Activated CD4-positive, alpha-beta T cell treated with anti-CD3 and anti-CD28 coated beads for 36 hours (primary cell): ENCODE measurements at regions of chr11 and their contacts with region 1.

Region 1: GRCh38 chr11:96112201-96113128 is 188.6 kb upstream of the MTMR2 start:
- DNase-seq: peak; percentile 58
- ATAC-seq: peak; percentile 87
- H3K4me3 Mint-ChIP-seq: peak overlapping the region; percentile 25
- H3K27ac Mint-ChIP-seq: peak overlapping the region; percentile 88
- H3K4me1 Mint-ChIP-seq: peaks cover 53% of the 10 kb centered on the region
- H3K27me3 Mint-ChIP-seq: no peaks in the 10 kb centered on the region

Region 2: DNA sequence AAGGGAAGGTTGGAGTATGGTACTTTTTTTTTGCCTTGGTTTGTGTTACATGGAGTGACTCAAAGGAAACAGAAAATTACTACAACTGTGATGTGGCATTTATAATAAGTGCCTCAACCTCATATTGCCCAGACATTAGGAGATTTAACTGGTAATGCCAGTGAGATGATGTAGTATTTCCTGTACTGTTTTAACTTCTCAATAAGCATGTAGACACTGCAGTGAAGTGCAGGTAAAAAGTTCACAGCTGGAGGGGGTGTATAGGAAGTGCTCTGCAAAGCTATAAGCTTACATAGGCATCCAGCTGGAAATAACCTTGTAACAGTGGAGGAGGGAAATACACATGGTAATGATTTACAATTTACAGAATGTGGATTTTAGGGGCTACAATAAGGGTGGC is 50.3 kb before region 1 on chr11:
- CTCF ChIA-PET with region 1: no interaction called
- POLR2A ChIA-PET with region 1: no interaction called
- intact Hi-C with region 1: loop called in 1 of 2 experiments (anchors 2 kb)
- DNase-seq: peak; percentile 65
- ATAC-seq: peak; percentile 87
- H3K4me3 Mint-ChIP-seq: peak overlapping the region; percentile 42
- H3K27ac Mint-ChIP-seq: peak overlapping the region; percentile 94
- H3K4me1 Mint-ChIP-seq: peaks cover 81% of the 10 kb centered on the region
- H3K27me3 Mint-ChIP-seq: no peaks in the 10 kb centered on the region

Region 3: GRCh38 chr11:96132155-96132823 is 19.8 kb after region 1 on chr11:
- CTCF ChIA-PET with region 1: interaction called, 4 read pairs
- POLR2A ChIA-PET with region 1: no interaction called
- intact Hi-C with region 1: loop called in 1 of 2 experiments (anchors 1 kb)
- DNase-seq: no peak
- ATAC-seq: peak; percentile 65
- H3K4me3 Mint-ChIP-seq: no peak overlapping the region
- H3K27ac Mint-ChIP-seq: no peak overlapping the region
- H3K4me1 Mint-ChIP-seq: peaks cover 73% of the 10 kb centered on the region
- H3K27me3 Mint-ChIP-seq: no peaks in the 10 kb centered on the region

Region 4: GRCh38 chr11:96155627-96156378 is 43.3 kb after region 1 on chr11:
- CTCF ChIA-PET with region 1: no interaction called
- POLR2A ChIA-PET with region 1: no interaction called
- intact Hi-C with region 1: loop called in 1 of 2 experiments (anchors 2 kb)
- DNase-seq: peak; percentile 85
- ATAC-seq: peak; percentile 62
- H3K4me3 Mint-ChIP-seq: peak overlapping the region; percentile 48
- H3K27ac Mint-ChIP-seq: peak overlapping the region; percentile 98
- H3K4me1 Mint-ChIP-seq: peaks cover 60% of the 10 kb centered on the region
- H3K27me3 Mint-ChIP-seq: no peaks in the 10 kb centered on the region